Ovary (tissue), 10 donors: ENCODE measurements at regions of chr4 and their contacts with region 1.

Region 1: DNA sequence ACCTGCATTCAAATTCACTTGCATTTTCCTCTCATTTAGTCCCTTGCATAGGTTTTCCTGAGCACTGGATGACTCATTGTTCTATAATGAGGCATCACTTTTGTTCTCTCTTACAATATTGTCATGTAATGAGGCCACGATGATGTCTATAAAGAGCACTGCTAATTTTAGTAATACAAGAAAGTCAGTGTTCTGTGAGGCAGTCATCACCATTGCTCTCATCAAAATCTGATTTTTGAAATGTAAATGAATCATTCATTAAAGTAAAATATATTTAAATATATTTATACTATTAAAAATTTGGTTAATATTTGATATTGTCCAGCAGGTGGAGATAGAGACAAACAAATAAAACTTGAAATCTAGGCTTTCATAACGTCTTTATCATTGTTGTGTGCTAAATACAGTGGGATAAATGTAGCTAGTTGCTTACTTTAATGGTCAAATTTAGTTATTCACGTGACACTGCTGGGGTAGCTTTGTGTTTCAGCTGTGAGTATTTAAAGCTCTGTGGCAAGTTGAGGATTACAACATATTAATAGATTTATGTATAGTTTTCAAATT is 15.4 kb downstream of the HMGB2 start:
- DNase-seq: no peak
- H3K4me3 ChIP-seq: no peak overlapping the region
- H3K27ac ChIP-seq: no peak overlapping the region
- H3K4me1 ChIP-seq: no peaks in the 10 kb centered on the region
- H3K27me3 ChIP-seq: no peaks in the 10 kb centered on the region
- CTCF ChIP-seq: peak in 2 of 3 donors; percentile 28 to 31
- EP300 ChIP-seq: no peak
- POLR2A ChIP-seq: no peak

Region 2: DNA sequence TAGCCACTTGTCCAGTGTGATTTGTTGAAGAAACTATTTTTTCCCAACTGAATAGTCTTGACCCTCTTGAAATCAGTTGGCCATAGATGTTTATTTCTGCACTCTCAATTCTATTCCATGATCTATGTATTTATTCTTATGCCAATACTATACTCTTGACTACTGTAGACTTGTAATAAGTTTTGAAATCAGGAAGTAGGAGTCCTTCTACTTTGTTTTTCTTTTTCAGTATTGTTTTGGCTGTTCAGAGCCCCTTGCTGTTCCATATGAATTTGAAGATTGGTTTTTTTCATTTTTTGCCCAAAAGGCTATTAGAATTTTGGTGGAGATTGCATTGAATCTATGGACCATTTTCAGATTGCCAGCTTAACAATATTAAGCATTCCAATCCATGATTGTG is 62.3 kb after region 1 on chr4:
- intact Hi-C with region 1: no loop called
- DNase-seq: no peak
- H3K4me3 ChIP-seq: no peak overlapping the region
- H3K27ac ChIP-seq: no peak overlapping the region
- H3K4me1 ChIP-seq: no peaks in the 10 kb centered on the region
- H3K27me3 ChIP-seq: no peaks in the 10 kb centered on the region
- CTCF ChIP-seq: no peak
- EP300 ChIP-seq: no peak
- POLR2A ChIP-seq: no peak

Region 3: GRCh38 chr4:173413036-173413435 is 94.3 kb after region 1 on chr4:
- intact Hi-C with region 1: loop called (anchors 2 to 5 kb)
- DNase-seq: no peak
- H3K4me3 ChIP-seq: no peak overlapping the region
- H3K27ac ChIP-seq: no peak overlapping the region
- H3K4me1 ChIP-seq: no peaks in the 10 kb centered on the region
- H3K27me3 ChIP-seq: no peaks in the 10 kb centered on the region
- CTCF ChIP-seq: no peak
- EP300 ChIP-seq: no peak
- POLR2A ChIP-seq: no peak

Region 4: GRCh38 chr4:173420324-173420752 is 101.6 kb after region 1 on chr4:
- intact Hi-C with region 1: loop called in 2 of 4 experiments (anchors 2 to 5 kb)
- DNase-seq: no peak
- H3K4me3 ChIP-seq: no peak overlapping the region
- H3K27ac ChIP-seq: no peak overlapping the region
- H3K4me1 ChIP-seq: no peaks in the 10 kb centered on the region
- H3K27me3 ChIP-seq: no peaks in the 10 kb centered on the region
- CTCF ChIP-seq: peak in 1 of 3 donors; percentile 31
- EP300 ChIP-seq: no peak
- POLR2A ChIP-seq: no peak